Activated CD4-positive, alpha-beta T cell treated with anti-CD3 and anti-CD28 coated beads for 36 hours (primary cell): ENCODE measurements at regions of chrX and their contacts with region 1.

Region 1: DNA sequence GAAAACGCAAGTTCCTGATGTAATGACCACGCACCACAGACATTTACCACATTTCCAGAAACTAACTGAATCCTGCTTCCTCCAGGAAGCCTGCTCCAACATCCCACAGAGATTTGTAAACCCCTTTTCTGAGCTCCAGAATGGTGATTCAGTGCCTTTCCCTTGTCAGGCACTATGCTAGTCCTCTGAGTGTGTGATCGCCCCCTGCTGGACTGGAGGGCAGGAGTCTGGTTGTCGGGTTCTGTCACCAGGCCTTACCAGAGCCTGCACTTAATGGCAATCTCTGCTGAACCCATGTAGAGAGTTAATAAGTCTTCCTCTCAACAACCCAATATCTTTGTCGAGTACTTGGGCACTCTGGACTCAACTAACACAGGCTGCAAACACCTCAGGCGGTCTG is 14.5 kb upstream of the KDM5C start:
- DNase-seq: peak; percentile 89
- ATAC-seq: peak; percentile 98
- H3K4me3 Mint-ChIP-seq: peak overlapping the region; percentile 27
- H3K27ac Mint-ChIP-seq: no peak overlapping the region
- H3K4me1 Mint-ChIP-seq: peaks cover 6% of the 10 kb centered on the region
- H3K27me3 Mint-ChIP-seq: no peaks in the 10 kb centered on the region

Region 2: GRCh38 chrX:53251307-53251706 is 11.8 kb after region 1 on chrX:
- CTCF ChIA-PET with region 1: interaction called, 12 read pairs
- POLR2A ChIA-PET with region 1: no interaction called
- intact Hi-C with region 1: no loop called
- DNase-seq: no peak
- ATAC-seq: no peak
- H3K4me3 Mint-ChIP-seq: no peak overlapping the region
- H3K27ac Mint-ChIP-seq: no peak overlapping the region
- H3K4me1 Mint-ChIP-seq: no peaks in the 10 kb centered on the region
- H3K27me3 Mint-ChIP-seq: no peaks in the 10 kb centered on the region

Region 3: GRCh38 chrX:53262918-53263394 is 23.5 kb after region 1 on chrX:
- CTCF ChIA-PET with region 1: interaction called, 11 read pairs
- POLR2A ChIA-PET with region 1: interaction called, 4 read pairs
- intact Hi-C with region 1: no loop called
- DNase-seq: peak; percentile 36
- ATAC-seq: peak; percentile 38
- H3K4me3 Mint-ChIP-seq: no peak overlapping the region
- H3K27ac Mint-ChIP-seq: no peak overlapping the region
- H3K4me1 Mint-ChIP-seq: peaks cover 28% of the 10 kb centered on the region
- H3K27me3 Mint-ChIP-seq: no peaks in the 10 kb centered on the region